Left lung (tissue), 14 donors: ENCODE measurements at regions of chr7 and their contacts with region 1.

Region 1: DNA sequence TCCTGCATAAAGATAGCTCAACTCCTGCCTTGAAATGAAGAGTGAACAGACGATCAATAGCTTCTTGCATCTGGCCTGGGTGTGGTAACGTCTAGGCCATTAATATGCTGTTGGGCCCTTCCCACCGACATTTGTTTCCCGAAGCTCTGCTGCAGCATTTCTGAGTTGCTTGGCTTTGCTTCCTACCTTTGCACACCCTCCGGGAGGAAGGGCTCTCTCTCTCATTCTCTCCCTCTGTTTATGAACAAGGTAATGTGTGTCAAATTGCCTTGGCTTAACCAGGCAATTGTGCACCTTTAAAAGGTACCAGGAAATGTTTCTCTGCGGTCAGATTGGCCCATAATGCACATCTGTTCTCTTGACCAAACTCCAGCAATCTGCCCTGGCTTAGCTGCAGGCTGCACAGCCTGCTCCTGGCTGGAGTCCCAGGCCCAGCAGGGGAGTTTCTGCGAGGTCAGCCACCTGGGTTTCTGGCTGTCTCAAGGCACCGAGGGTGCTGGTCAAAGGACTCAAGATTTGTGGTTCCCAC is 223.7 kb downstream of the SNX10 start:
- DNase-seq: no peak
- ATAC-seq: no peak
- H3K4me3 ChIP-seq: no peak overlapping the region
- H3K27ac ChIP-seq: no peak overlapping the region
- H3K4me1 ChIP-seq: no peaks in the 10 kb centered on the region
- H3K27me3 ChIP-seq: no peaks in the 10 kb centered on the region
- CTCF ChIP-seq: no peak

Region 2: DNA sequence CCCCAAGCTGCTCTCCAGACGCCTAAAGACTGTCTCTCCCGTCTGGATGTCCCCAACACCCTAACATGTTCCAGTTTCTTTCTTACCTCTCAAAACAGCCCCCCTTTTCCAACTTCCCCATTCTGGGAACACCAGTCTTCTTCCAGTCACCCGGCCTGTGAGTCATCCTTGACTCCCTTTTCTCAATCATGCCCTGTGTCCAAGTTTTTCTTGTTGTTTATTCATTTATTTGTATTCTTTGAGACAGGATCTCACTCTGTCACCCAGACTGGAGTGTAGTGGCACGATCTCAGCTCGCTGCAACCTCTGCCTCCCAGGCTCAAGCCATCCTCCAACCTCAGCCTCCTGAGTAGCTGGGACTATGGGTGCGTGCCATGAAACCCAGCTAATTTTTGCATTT is 208.2 kb before region 1 on chr7:
- intact Hi-C with region 1: no loop called
- DNase-seq: peak in 1 of 4 donors; percentile 63
- ATAC-seq: peak; percentile 66
- H3K4me3 ChIP-seq: no peak overlapping the region
- H3K27ac ChIP-seq: peak overlapping the region; percentile 76 to 95
- H3K4me1 ChIP-seq: peaks cover 0 to 64% of the 10 kb centered on the region in 2 donors
- H3K27me3 ChIP-seq: no peaks in the 10 kb centered on the region
- CTCF ChIP-seq: no peak

Region 3: GRCh38 chr7:26398756-26399501 is 116.4 kb before region 1 on chr7:
- intact Hi-C with region 1: no loop called
- DNase-seq: peak; percentile 46 to 89 (median 60)
- ATAC-seq: peak; percentile 79
- H3K4me3 ChIP-seq: peak overlapping the region; percentile 68 to 70
- H3K27ac ChIP-seq: peak overlapping the region; percentile 86 to 88
- H3K4me1 ChIP-seq: peaks cover 10 to 28% of the 10 kb centered on the region in 2 donors
- H3K27me3 ChIP-seq: peaks cover 0 to 33% of the 10 kb centered on the region in 2 donors
- CTCF ChIP-seq: peak in 1 of 2 donors; percentile 23

Region 4: GRCh38 chr7:26653430-26653911 is 138.1 kb after region 1 on chr7:
- intact Hi-C with region 1: loop called in 1 of 2 experiments (anchors 10 kb)
- DNase-seq: no peak
- ATAC-seq: no peak
- H3K4me3 ChIP-seq: no peak overlapping the region
- H3K27ac ChIP-seq: no peak overlapping the region
- H3K4me1 ChIP-seq: no peaks in the 10 kb centered on the region
- H3K27me3 ChIP-seq: no peaks in the 10 kb centered on the region
- CTCF ChIP-seq: no peak